Calu3 (cell line): ENCODE measurements at regions of chr16 and their contacts with region 1.

Region 1: GRCh38 chr16:71526111-71526631 is at the start of gene CHST4:
- DNase-seq: peak; percentile 82
- H3K4me3 Mint-ChIP-seq: peak within 1 kb of the TSS; percentile 81
- H3K27ac Mint-ChIP-seq: peak within 1 kb of the TSS; percentile 96
- H3K4me1 Mint-ChIP-seq: peaks cover 61% of the 10 kb centered on the region
- H3K27me3 Mint-ChIP-seq: no peaks in the 10 kb centered on the region
- CTCF ChIP-seq: no peak
- total RNA-seq, gene CHST4: 72.9 and 105 TPM in 2 replicates

Region 2: DNA sequence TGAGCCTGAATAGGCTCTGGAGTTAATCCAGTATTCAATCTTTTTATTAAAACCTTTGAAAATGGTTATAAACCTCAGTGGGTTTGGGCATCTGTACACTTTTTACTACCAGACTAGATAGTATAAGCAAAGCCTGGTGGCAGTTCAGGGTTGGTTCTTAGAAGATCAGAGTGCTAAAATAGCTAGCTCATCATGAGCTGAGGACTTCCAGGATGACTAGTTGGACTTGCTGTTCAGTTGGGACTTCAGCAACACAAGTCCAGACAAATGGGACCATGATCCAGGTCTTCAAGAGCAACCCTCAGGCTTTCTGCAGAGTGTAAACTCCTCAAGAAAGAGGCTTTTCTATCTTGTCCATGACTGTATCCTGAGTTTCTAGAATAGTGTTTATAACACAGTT is 35.8 kb before region 1 on chr16:
- CTCF ChIA-PET with region 1: no interaction called
- intact Hi-C with region 1: no loop called
- DNase-seq: no peak
- H3K4me3 Mint-ChIP-seq: no peak overlapping the region
- H3K27ac Mint-ChIP-seq: no peak overlapping the region
- H3K4me1 Mint-ChIP-seq: no peaks in the 10 kb centered on the region
- H3K27me3 Mint-ChIP-seq: no peaks in the 10 kb centered on the region
- CTCF ChIP-seq: no peak

Region 3: DNA sequence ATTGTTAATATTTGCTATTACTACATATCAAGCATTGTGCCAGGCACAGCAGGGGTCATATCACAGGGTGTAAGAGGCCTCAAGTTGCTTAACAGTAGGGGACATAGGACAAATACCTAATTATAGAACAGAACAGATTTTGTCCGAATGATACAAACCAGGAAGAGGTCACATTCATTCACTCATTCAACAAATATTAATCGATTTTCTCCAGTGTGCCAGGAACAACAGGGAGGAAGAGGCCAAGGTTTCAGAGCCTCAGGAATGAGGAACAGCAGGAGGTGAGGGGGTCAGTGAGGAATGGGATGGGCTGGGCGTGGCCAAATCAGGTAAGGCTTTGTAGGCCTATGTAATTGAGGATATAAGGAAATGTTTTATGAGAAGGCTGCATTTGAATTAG is 11.1 kb before region 1 on chr16:
- CTCF ChIA-PET with region 1: interaction called, 4 read pairs
- intact Hi-C with region 1: loop called (anchors 1 kb)
- DNase-seq: peak; percentile 93
- H3K4me3 Mint-ChIP-seq: peak overlapping the region; percentile 17
- H3K27ac Mint-ChIP-seq: peak overlapping the region; percentile 82
- H3K4me1 Mint-ChIP-seq: peaks cover 65% of the 10 kb centered on the region
- H3K27me3 Mint-ChIP-seq: no peaks in the 10 kb centered on the region
- CTCF ChIP-seq: no peak

Region 4: GRCh38 chr16:71758293-71758760 is 232.2 kb after region 1 on chr16:
- CTCF ChIA-PET with region 1: no interaction called
- intact Hi-C with region 1: no loop called
- DNase-seq: no peak
- H3K4me3 Mint-ChIP-seq: no peak overlapping the region
- H3K27ac Mint-ChIP-seq: no peak overlapping the region
- H3K4me1 Mint-ChIP-seq: peaks cover 6% of the 10 kb centered on the region
- H3K27me3 Mint-ChIP-seq: no peaks in the 10 kb centered on the region
- CTCF ChIP-seq: no peak